Dorsolateral prefrontal cortex (tissue), 120 donors: ENCODE measurements at regions of chr14 and their contacts with region 1.

Region 1: DNA sequence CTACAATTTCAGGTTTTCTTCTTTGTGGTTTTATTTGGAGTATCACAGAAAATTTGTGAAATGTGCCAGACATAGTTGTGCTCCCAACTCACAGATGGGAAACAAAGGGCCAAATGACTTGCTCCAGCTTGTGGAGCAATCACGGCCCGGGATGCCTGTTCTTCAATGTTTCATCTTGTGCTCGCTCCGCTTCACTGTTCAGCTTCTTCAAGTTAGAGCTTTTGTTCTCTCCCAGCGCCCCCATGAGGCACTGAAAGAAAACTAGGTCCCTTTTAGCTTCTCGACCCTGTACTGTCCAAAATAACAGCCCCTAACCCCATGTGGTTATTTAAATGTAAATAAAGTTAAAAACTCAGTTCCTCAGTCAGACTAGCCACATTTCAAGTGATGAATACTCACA is 187.9 kb upstream of the STXBP6 start:
- DNase-seq: peak in 1 of 10 donors; percentile 40
- H3K4me3 ChIP-seq: no peak overlapping the region
- H3K27ac ChIP-seq: no peak overlapping the region
- H3K27me3 ChIP-seq: peaks cover 0 to 5% (median 0%) of the 10 kb centered on the region in 45 donors
- CTCF ChIP-seq: peak in 40 of 56 donors; percentile 13 to 61 (median 36)

Region 2: GRCh38 chr14:25150934-25151790 is 86.7 kb before region 1 on chr14:
- intact Hi-C with region 1: loop called in 1 of 2 experiments (anchors 10 kb)
- DNase-seq: no peak
- H3K4me3 ChIP-seq: no peak overlapping the region
- H3K27ac ChIP-seq: no peak overlapping the region
- H3K27me3 ChIP-seq: no peaks in the 10 kb centered on the region
- CTCF ChIP-seq: peak; percentile 71 to 98 (median 88)

Region 3: GRCh38 chr14:25220514-25220913 is 17.3 kb before region 1 on chr14:
- intact Hi-C with region 1: no loop called
- DNase-seq: no peak
- H3K4me3 ChIP-seq: no peak overlapping the region
- H3K27ac ChIP-seq: no peak overlapping the region
- H3K27me3 ChIP-seq: peaks cover 0 to 8% (median 0%) of the 10 kb centered on the region in 45 donors
- CTCF ChIP-seq: no peak

Region 4: GRCh38 chr14:25628390-25628789 is 390.5 kb after region 1 on chr14:
- intact Hi-C with region 1: no loop called
- DNase-seq: no peak
- H3K4me3 ChIP-seq: no peak overlapping the region
- H3K27ac ChIP-seq: no peak overlapping the region
- H3K27me3 ChIP-seq: no peaks in the 10 kb centered on the region
- CTCF ChIP-seq: no peak